ENCODE measurements at regions of chr3 and their contacts with region 1.

Region 1: DNA sequence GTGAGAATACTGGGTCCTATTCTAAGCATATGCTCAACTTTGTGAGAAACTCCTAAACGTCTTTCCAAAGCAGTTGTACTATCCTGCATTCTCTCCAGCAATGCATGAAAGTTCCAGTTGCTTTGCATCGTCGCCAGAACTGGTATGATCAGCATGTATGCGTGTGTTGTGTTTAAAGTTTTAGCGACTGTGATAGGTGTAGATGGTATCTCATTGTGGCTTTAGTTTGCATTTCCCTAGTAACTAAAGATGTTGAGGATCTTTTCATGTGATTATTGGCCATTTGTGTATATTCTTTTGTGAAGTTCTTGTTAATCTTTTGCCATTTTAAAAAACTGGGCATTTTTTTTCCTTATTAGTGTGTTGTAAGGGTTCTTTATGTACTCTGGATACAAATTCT is 115.1 kb downstream of the SPATA16 start:
- DNase-seq: no peak
- ATAC-seq: no peak
- H3K4me3 Mint-ChIP-seq: no peak overlapping the region
- H3K27ac Mint-ChIP-seq: no peak overlapping the region
- H3K4me1 Mint-ChIP-seq: no peaks in the 10 kb centered on the region
- H3K27me3 Mint-ChIP-seq: no peaks in the 10 kb centered on the region
- CTCF ChIP-seq: no peak

Region 2: GRCh38 chr3:172939651-172940293 is 86.2 kb before region 1 on chr3:
- CTCF ChIA-PET with region 1: no interaction called
- POLR2A ChIA-PET with region 1: no interaction called
- intact Hi-C with region 1: loop called (anchors 10 kb)
- DNase-seq: no peak
- ATAC-seq: no peak
- H3K4me3 Mint-ChIP-seq: no peak overlapping the region
- H3K27ac Mint-ChIP-seq: no peak overlapping the region
- H3K4me1 Mint-ChIP-seq: no peaks in the 10 kb centered on the region
- H3K27me3 Mint-ChIP-seq: peaks cover 2% of the 10 kb centered on the region
- CTCF ChIP-seq: no peak

Region 3: DNA sequence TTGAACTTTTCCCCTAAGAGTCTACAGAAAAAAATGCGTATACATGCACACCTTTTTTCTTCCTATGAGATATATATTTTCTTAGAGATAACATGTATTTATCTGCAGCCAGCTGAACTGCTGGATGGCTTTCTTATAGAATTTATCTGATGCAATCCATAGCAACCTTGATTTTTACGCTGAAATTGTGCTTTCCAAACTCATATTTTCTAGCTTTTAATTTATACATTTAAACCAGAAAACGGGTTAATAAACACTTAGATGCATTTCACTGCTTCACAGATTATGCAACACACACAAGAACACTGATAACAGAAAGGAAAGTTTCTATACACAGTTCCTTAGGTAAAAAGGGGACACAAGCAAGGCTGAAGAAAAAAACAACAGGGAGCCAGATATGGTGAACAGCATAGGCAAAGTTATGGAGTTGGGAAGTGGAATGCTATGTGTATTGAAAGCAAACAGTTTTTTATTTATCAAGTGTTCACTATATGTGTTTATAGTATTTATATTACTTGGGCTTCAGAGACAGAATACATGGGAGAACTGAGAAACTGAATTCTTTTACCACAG is 34.4 kb before region 1 on chr3:
- CTCF ChIA-PET with region 1: no interaction called
- POLR2A ChIA-PET with region 1: no interaction called
- intact Hi-C with region 1: no loop called
- DNase-seq: no peak
- ATAC-seq: no peak
- H3K4me3 Mint-ChIP-seq: no peak overlapping the region
- H3K27ac Mint-ChIP-seq: no peak overlapping the region
- H3K4me1 Mint-ChIP-seq: no peaks in the 10 kb centered on the region
- H3K27me3 Mint-ChIP-seq: no peaks in the 10 kb centered on the region
- CTCF ChIP-seq: no peak

Measured in activated CD8-positive, alpha-beta T cell treated with anti-CD3 and anti-CD28 coated beads for 36 hours (primary cell).